Activated T-helper 1 cell treated with anti-CD3 and anti-CD28 coated beads, Interleukin-12 subunit alpha, Interleukin-12 subunit beta, Interleukin-2, Interleukin-4 antibody, amounts not matched to agents 30 ng/mL and 10 ng/mL and 1 ng/mL, durations not matched to agents 14 hours and 24 hours and 36 hours (primary cell): ENCODE measurements at regions of chr11 and their contacts with region 1.

Region 1: GRCh38 chr11:75445315-75445953 is 12.4 kb upstream of the KLHL35 start:
- DNase-seq: peak; percentile 46
- H3K4me3 Mint-ChIP-seq: no peak overlapping the region
- H3K27ac Mint-ChIP-seq: no peak overlapping the region
- H3K4me1 Mint-ChIP-seq: no peaks in the 10 kb centered on the region
- H3K27me3 Mint-ChIP-seq: peaks cover 4% of the 10 kb centered on the region

Region 2: GRCh38 chr11:73810637-73811036 is 1634.8 kb before region 1 on chr11:
- intact Hi-C with region 1: no loop called
- DNase-seq: no peak
- H3K4me3 Mint-ChIP-seq: no peak overlapping the region
- H3K27ac Mint-ChIP-seq: no peak overlapping the region
- H3K4me1 Mint-ChIP-seq: no peaks in the 10 kb centered on the region
- H3K27me3 Mint-ChIP-seq: no peaks in the 10 kb centered on the region

Region 3: GRCh38 chr11:75214411-75214821 is 231.0 kb before region 1 on chr11:
- intact Hi-C with region 1: no loop called
- DNase-seq: peak; percentile 68
- H3K4me3 Mint-ChIP-seq: no peak overlapping the region
- H3K27ac Mint-ChIP-seq: no peak overlapping the region
- H3K4me1 Mint-ChIP-seq: peaks cover 5% of the 10 kb centered on the region
- H3K27me3 Mint-ChIP-seq: peaks cover 10% of the 10 kb centered on the region

Region 4: GRCh38 chr11:75532200-75533048 is 87.0 kb after region 1 on chr11:
- intact Hi-C with region 1: loop called (anchors 1 kb)
- DNase-seq: peak; percentile 74
- H3K4me3 Mint-ChIP-seq: peak overlapping the region; percentile 1
- H3K27ac Mint-ChIP-seq: no peak overlapping the region
- H3K4me1 Mint-ChIP-seq: peaks cover 35% of the 10 kb centered on the region
- H3K27me3 Mint-ChIP-seq: peaks cover 12% of the 10 kb centered on the region

Region 5: GRCh38 chr11:75577207-75577606 is 131.8 kb after region 1 on chr11:
- intact Hi-C with region 1: loop called (anchors 1 kb)
- DNase-seq: no peak
- H3K4me3 Mint-ChIP-seq: no peak overlapping the region
- H3K27ac Mint-ChIP-seq: no peak overlapping the region
- H3K4me1 Mint-ChIP-seq: peaks cover 1% of the 10 kb centered on the region
- H3K27me3 Mint-ChIP-seq: peaks cover 13% of the 10 kb centered on the region